IMR-90 (cell line): ENCODE measurements at regions of chr6 and their contacts with region 1.

Region 1: DNA sequence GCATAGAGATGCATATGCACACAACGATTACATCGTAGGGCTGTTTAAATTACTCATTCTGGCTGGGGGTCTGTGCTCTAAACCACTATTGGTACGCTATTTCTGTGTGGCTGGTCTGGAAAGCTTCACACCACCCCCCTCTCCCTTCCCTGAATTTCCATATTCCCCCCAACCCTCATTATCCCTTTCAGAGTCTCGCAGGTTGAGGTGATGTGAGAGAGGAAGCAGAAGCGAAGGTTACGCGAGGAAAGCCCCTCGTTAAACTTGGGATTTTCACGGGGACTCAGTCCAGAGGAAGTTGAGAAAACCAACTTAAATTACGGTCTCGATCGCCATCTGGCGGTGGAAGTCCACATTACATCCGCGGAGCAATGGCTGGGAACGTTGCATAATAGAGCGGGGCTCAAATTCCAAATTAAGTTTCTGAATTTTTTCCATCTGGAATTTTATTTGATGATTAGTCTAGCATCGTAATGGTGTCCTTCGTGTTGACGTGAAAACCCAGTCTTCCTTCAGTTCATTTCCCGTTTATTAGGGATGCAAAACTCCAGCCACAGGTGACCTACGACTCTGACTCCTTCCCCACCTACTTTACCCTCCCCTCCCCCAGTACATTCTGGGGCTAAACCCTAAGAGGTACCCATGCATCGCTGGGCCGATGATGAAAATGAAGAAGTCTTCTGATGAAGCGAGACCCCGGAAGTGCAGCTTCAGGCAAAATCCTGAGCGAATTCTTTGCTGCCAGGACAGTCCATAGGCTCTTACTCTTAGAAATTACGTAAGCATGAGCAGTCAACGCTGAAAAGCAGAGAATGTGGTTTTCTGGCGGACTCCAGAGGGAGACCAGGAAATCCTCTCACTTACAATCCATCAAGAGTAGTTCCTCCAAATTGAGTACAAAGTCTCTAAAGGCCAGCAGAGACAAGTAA is 19.7 kb downstream of the HLA-DOB start:
- DNase-seq: peak; percentile 58
- ATAC-seq: peak; percentile 95
- H3K4me3 ChIP-seq: peak overlapping the region; percentile 10
- H3K27ac ChIP-seq: no peak overlapping the region
- H3K4me1 ChIP-seq: no peaks in the 10 kb centered on the region
- H3K27me3 ChIP-seq: peaks cover 20% of the 10 kb centered on the region
- CTCF ChIP-seq: peak; percentile 86
- POLR2A ChIP-seq: no peak
- RAD21 ChIP-seq: peak; percentile 66

Region 2: DNA sequence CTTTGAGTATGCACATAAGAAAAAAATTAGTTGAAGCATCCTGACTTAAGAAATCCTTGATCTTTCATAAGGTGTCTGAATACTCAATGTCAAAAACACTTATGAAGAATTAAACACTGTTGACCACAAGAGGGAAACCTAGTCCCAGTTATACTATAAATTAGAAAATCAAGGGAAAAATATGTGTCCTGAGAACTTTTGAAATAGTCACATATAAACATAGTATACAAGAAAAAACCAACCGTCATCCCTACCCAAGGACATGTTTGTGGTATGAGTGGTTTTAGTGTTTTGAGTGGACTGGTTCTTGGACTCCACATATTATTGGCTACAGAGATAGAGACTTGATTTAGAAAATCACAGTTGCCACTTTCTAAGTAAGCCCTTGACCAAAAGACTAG is 365.1 kb before region 1 on chr6:
- CTCF ChIA-PET with region 1: no interaction called
- POLR2A ChIA-PET with region 1: no interaction called
- dilution Hi-C with region 1: no loop called
- in situ Hi-C with region 1: no loop called
- intact Hi-C with region 1: loop called (anchors 5 kb)
- DNase-seq: peak; percentile 30
- ATAC-seq: no peak; the same call in 1 of the 2 replicates
- H3K4me3 ChIP-seq: no peak overlapping the region
- H3K27ac ChIP-seq: no peak overlapping the region
- H3K4me1 ChIP-seq: no peaks in the 10 kb centered on the region
- H3K27me3 ChIP-seq: no peaks in the 10 kb centered on the region; the same call in 1 of the 2 replicates
- CTCF ChIP-seq: peak; percentile 40
- POLR2A ChIP-seq: no peak
- RAD21 ChIP-seq: peak; percentile 21

Region 3: DNA sequence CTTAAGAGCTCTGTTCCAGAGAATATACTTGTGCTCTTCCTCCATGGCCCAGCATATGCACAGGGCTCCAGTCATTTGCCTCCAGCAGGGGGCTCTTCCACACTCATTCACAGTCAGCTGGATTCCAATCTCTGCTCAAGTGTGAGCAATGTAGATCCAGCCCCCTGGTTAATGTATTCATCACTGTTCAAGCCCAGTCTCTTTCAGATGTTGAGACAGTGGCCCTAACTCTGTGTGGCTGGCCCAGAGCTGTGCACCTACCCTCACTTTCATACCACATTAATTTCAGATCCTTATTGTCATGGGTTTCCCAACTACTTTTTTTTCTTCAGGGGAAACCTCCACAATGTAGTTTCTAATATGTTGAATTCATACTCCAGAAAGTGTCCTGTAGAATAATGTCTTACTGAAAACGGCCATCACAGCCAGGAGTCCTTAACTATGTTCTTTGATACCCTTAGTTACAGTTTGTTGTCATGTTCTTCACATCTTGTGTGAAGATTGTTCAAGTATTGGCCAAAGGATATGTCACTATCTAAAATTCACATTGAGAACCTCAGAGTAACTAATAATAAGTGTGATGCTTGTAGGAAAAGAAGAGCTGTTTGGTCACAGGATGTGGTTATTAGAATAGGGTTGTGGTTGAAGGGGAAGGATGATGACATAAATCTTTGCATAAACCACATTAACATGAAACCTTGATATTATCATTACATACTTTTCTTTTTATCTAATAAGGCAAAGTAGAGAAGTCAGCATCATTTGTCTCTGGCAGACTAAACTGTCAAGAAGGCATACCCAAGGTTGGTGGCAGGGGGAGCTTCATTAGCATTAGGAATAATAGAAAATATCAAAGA is 174.3 kb before region 1 on chr6:
- CTCF ChIA-PET with region 1: no interaction called
- POLR2A ChIA-PET with region 1: no interaction called
- dilution Hi-C with region 1: no loop called
- in situ Hi-C with region 1: no loop called
- intact Hi-C with region 1: loop called (anchors 1 kb)
- DNase-seq: peak; percentile 28
- ATAC-seq: peak; percentile 80
- H3K4me3 ChIP-seq: no peak overlapping the region
- H3K27ac ChIP-seq: no peak overlapping the region
- H3K4me1 ChIP-seq: no peaks in the 10 kb centered on the region
- H3K27me3 ChIP-seq: no peaks in the 10 kb centered on the region
- CTCF ChIP-seq: peak; percentile 22; the same call in 1 of the 2 replicates
- POLR2A ChIP-seq: no peak
- RAD21 ChIP-seq: no peak